ENCODE measurements at regions of chr12 and their contacts with region 1.

Region 1: GRCh38 chr12:71663561-71664294 is at the start of gene ZFC3H1:
- H3K4me3 Mint-ChIP-seq: peak within 1 kb of the TSS; percentile 93
- H3K27ac Mint-ChIP-seq: peak within 1 kb of the TSS; percentile 100
- H3K4me1 Mint-ChIP-seq: peaks cover 32% of the 10 kb centered on the region
- H3K27me3 Mint-ChIP-seq: no peaks in the 10 kb centered on the region

Region 2: GRCh38 chr12:71719615-71720370 is 56.1 kb after region 1 on chr12:
- intact Hi-C with region 1: no loop called
- H3K4me3 Mint-ChIP-seq: no peak overlapping the region
- H3K27ac Mint-ChIP-seq: no peak overlapping the region
- H3K4me1 Mint-ChIP-seq: no peaks in the 10 kb centered on the region
- H3K27me3 Mint-ChIP-seq: no peaks in the 10 kb centered on the region

Region 3: GRCh38 chr12:71746983-71747611 is 83.4 kb after region 1 on chr12:
- intact Hi-C with region 1: loop called (anchors 2 kb)
- H3K4me3 Mint-ChIP-seq: no peak overlapping the region
- H3K27ac Mint-ChIP-seq: no peak overlapping the region
- H3K4me1 Mint-ChIP-seq: no peaks in the 10 kb centered on the region
- H3K27me3 Mint-ChIP-seq: peaks cover 11% of the 10 kb centered on the region

Region 4: DNA sequence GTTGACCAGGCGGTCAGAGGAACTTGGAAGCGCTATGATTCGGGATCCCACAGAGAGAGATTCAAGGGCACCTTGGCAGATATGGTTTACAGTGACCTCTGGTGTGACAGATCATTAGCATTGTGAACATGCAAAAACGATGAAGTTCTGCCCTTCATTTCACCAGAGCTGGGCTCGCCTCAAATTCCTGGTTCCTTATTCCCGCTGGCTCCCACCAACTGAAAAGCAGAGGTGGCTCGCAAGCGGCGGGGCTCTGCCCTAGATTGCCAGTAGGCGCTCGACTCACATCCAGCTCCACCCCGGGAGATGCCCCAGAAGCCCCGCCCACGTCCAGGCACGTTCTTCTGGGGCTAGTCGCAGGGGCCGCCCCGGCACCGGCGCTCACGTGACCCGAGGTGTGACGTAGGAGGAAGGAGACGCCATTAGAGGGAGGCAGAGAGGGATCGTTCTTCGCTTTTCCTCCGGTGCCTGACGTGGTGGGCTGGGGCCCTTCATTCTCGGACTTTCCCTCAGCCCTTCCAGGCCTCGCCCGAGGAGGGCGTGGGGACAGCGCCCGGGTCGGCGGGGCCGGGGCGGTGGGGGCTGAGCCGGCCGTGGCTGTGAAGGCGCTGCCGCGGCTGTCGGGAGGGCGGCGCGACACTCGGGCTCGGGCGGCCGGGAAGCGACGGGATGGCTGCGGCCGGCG is 90.9 kb after region 1 on chr12 and contains the start of gene RAB21:
- intact Hi-C with region 1: loop called (anchors 1 kb)
- H3K4me3 Mint-ChIP-seq: peak within 1 kb of the TSS; percentile 82
- H3K27ac Mint-ChIP-seq: peak within 1 kb of the TSS; percentile 94
- H3K4me1 Mint-ChIP-seq: peaks cover 16% of the 10 kb centered on the region
- H3K27me3 Mint-ChIP-seq: peaks cover 7% of the 10 kb centered on the region